ENCODE measurements at regions of chr1 and their contacts with region 1.

Region 1: DNA sequence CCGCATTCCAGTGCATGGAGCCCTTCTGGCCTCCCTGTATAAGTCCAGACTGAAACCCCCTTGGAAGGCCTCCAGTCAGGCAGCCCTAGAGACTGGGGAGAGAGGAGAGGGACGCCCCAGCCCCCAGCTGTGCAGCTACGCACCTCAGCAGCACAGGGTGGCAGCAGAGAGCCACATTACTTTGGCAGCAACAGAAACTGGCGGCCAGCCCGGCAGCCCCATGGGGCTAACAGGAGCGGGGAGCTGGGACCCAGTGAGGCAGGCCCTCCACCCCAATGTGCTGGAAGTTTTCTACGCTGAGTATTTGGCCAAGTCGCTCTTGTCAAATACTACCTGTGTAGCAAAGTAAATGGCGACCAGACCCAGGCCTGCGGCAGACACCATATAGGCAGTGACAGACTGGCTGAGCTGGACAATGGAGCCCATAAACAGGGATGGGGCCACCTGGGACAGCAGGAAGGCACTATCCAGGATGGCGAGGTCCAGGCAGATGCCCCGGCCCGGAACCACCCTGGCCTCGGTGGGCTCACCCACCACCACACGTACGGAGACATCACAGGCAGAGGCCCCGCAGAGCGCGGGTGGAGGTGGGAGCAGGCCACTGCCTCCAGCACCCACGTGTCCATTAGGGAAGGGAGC is 21.2 kb downstream of the SLC45A3 start:
- DNase-seq: peak; percentile 70 to 81
- H3K4me3 ChIP-seq: no peak overlapping the region
- H3K4me3 Mint-ChIP-seq: no peak overlapping the region
- H3K27ac Mint-ChIP-seq: no peak overlapping the region
- H3K4me1 ChIP-seq: no peaks in the 10 kb centered on the region
- H3K4me1 Mint-ChIP-seq: no peaks in the 10 kb centered on the region
- H3K27me3 ChIP-seq: no peaks in the 10 kb centered on the region
- H3K27me3 Mint-ChIP-seq: no peaks in the 10 kb centered on the region
- CTCF ChIP-seq: peak; percentile 85 to 90

Region 2: DNA sequence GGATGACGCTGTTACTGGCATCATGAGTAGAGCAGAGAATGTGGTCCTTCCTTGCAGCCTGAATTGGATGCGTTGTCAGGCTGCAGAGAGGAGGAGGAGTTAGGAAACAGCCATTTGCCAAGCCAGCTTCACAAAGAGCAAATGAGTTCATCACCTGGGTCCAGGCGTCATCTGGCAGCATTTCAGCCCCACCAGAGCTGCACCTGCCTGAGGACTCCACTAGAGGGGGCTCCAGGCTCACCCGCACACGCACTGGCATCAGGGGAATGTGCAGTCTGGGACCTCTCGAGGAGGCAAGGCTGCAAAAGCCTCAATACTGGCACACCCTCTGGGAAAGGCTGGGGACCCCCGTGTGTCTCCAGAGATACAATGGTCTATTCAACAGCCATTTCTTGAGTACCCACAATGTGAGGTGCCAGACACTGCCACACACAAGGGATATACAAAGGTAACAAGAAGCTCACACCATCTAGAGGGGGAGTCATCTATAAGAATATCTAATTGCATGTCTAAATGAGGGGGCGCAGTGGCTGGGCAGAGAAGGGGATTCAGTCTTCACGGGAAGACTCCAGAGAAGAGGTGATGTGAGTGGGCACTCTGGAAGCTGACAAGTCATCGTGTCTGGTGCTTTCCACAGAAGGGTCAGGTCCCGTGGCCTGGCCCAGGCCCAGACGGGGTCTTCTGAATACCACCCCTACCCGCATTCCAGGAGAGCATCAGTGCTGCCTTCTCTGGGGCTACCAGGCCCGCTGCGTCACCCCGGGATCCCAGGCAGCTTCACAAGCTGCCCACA is 669.6 kb before region 1 on chr1:
- CTCF ChIA-PET with region 1: interaction called, 11 read pairs
- POLR2A ChIA-PET with region 1: no interaction called
- intact Hi-C with region 1: no loop called
- DNase-seq: peak; percentile 61 to 76
- H3K4me3 ChIP-seq: no peak overlapping the region
- H3K4me3 Mint-ChIP-seq: no peak overlapping the region
- H3K27ac Mint-ChIP-seq: no peak overlapping the region
- H3K4me1 ChIP-seq: no peaks in the 10 kb centered on the region
- H3K4me1 Mint-ChIP-seq: no peaks in the 10 kb centered on the region
- H3K27me3 ChIP-seq: no peaks in the 10 kb centered on the region; the same call in 1 of the 2 replicates
- H3K27me3 Mint-ChIP-seq: peaks cover 22% of the 10 kb centered on the region
- CTCF ChIP-seq: peak; percentile 94 to 97

Region 3: DNA sequence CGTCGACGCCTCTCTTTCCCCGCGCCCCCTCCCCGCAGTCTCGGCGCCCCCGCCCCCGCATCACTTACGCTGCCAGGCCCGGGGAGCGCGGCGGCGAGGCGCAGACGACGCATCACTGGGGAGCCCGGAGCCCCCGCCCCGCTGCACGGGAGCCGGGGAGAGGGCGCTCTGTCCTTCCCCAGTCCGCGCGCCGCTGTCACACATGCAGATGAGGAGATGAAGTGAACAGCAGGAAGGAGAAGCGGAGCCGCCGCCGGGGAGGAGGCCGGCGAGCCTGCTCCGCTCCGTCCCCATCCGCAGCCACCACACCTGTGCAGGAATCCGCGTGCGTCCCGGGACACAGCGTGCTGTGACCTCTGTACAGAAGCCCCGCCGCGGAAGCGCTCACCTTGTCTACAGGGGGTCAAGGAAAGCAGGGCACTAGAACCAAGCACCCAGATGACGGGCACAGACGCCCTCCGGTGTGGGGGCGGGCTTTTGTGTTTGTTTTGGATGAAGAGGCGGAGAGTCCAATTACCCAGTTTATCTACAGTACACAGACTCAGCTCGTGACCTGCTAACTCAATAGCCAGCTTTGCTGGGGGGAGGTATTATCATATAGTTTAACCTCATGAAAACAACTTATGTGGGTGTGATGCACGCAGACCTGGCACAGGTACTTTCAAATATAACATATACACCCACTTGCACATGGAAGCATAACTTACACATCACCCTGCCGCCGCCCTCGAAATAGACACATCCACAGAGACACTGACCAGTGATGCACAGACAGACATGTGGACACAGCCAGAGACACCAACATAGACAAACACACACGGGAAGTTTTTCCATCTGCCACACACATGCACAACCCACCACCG is 314.8 kb before region 1 on chr1:
- CTCF ChIA-PET with region 1: no interaction called
- POLR2A ChIA-PET with region 1: no interaction called
- intact Hi-C with region 1: no loop called
- DNase-seq: peak; percentile 51 to 56
- H3K4me3 ChIP-seq: peak overlapping the region; percentile 33
- H3K4me3 Mint-ChIP-seq: peak overlapping the region; percentile 77
- H3K27ac Mint-ChIP-seq: no peak overlapping the region
- H3K4me1 ChIP-seq: 0 out of 2 replicates have a peak, but pooled peaks cover 5% of the 10 kb centered on the region
- H3K4me1 Mint-ChIP-seq: peaks cover 7% of the 10 kb centered on the region
- H3K27me3 ChIP-seq: no peaks in the 10 kb centered on the region; the same call in 1 of the 2 replicates
- H3K27me3 Mint-ChIP-seq: peaks cover 16% of the 10 kb centered on the region
- CTCF ChIP-seq: peak in 1 of 2 experiments; percentile 2

Region 4: GRCh38 chr1:205504311-205504984 is 154.6 kb before region 1 on chr1 and contains the start of gene CDK18:
- CTCF ChIA-PET with region 1: interaction called, 13 read pairs
- POLR2A ChIA-PET with region 1: no interaction called
- intact Hi-C with region 1: no loop called
- DNase-seq: peak; percentile 77 to 89
- H3K4me3 ChIP-seq: peak within 1 kb of the TSS; percentile 55
- H3K4me3 Mint-ChIP-seq: peak within 1 kb of the TSS; percentile 95
- H3K27ac Mint-ChIP-seq: peak within 1 kb of the TSS; percentile 82
- H3K4me1 ChIP-seq: peaks cover 30% of the 10 kb centered on the region
- H3K4me1 Mint-ChIP-seq: peaks cover 16% of the 10 kb centered on the region
- H3K27me3 ChIP-seq: no peaks in the 10 kb centered on the region
- H3K27me3 Mint-ChIP-seq: no peaks in the 10 kb centered on the region
- CTCF ChIP-seq: no peak
- total RNA-seq, gene CDK18: 17.0 and 18.5 TPM in 2 replicates

Region 5: GRCh38 chr1:205591522-205592351 is 67.3 kb before region 1 on chr1:
- CTCF ChIA-PET with region 1: interaction called, 95 read pairs
- POLR2A ChIA-PET with region 1: no interaction called
- intact Hi-C with region 1: loop called (anchors 1 kb)
- DNase-seq: peak; percentile 87 to 93
- H3K4me3 ChIP-seq: peak overlapping the region; percentile 38
- H3K4me3 Mint-ChIP-seq: peak overlapping the region; percentile 73
- H3K27ac Mint-ChIP-seq: no peak overlapping the region
- H3K4me1 ChIP-seq: no peaks in the 10 kb centered on the region
- H3K4me1 Mint-ChIP-seq: no peaks in the 10 kb centered on the region
- H3K27me3 ChIP-seq: no peaks in the 10 kb centered on the region
- H3K27me3 Mint-ChIP-seq: no peaks in the 10 kb centered on the region
- CTCF ChIP-seq: peak; percentile 97 to 98

Region 6: DNA sequence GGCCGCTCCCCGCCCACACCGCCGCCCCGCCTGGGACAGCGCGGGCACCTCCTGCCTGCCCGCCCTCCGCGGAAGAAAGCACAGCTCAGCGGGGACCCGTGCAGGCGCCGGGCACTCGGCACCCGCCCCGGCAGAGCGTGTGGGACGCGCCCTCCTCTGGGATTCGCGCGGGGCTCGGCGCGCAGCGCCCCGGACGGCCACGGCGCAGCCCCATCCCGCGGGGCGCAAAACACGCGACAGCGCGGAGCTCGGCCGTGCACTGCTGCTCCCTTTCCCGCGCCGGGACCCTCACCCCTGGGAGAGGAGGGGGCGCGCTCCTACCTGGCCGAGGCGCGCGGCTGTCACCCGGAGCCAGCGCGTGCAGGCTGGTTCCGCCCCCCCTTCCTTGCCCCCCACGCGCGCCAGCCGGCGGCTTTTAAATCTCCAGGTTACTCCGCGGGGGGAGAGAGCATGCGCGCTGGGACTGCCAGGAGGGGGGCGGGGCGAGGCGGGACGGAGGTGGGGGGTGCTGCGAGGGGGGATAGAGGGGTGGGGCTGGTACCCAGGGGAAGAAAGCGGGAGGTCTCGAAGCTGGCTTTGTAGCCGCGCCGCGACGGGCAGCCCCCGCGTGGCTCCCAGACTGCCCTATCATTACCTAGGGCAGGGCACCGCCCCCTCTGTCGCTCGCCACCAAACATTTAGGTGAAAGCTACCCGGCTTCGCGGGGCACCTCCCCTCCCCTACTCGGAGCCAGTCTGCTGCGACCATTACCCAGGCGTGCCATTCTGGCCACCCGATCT is 21.2 kb after region 1 on chr1 and contains the start of gene SLC45A3:
- CTCF ChIA-PET with region 1: interaction called, 20 read pairs
- POLR2A ChIA-PET with region 1: no interaction called
- intact Hi-C with region 1: no loop called
- DNase-seq: peak; percentile 39 to 44
- H3K4me3 ChIP-seq: peak within 1 kb of the TSS; percentile 85
- H3K4me3 Mint-ChIP-seq: peak within 1 kb of the TSS; percentile 84
- H3K27ac Mint-ChIP-seq: peak within 1 kb of the TSS; percentile 42
- H3K4me1 ChIP-seq: peaks cover 28% of the 10 kb centered on the region
- H3K4me1 Mint-ChIP-seq: peaks cover 33% of the 10 kb centered on the region
- H3K27me3 ChIP-seq: no peaks in the 10 kb centered on the region
- H3K27me3 Mint-ChIP-seq: no peaks in the 10 kb centered on the region
- CTCF ChIP-seq: no peak
- total RNA-seq, gene SLC45A3: 5.5 TPM in 2 replicates

Region 7: GRCh38 chr1:205739348-205740160 is 80.5 kb after region 1 on chr1:
- CTCF ChIA-PET with region 1: interaction called, 15 read pairs
- POLR2A ChIA-PET with region 1: no interaction called
- intact Hi-C with region 1: no loop called
- DNase-seq: peak in 1 of 2 experiments; percentile 23
- H3K4me3 ChIP-seq: no peak overlapping the region
- H3K4me3 Mint-ChIP-seq: no peak overlapping the region
- H3K27ac Mint-ChIP-seq: no peak overlapping the region
- H3K4me1 ChIP-seq: no peaks in the 10 kb centered on the region
- H3K4me1 Mint-ChIP-seq: peaks cover 10% of the 10 kb centered on the region
- H3K27me3 ChIP-seq: no peaks in the 10 kb centered on the region
- H3K27me3 Mint-ChIP-seq: no peaks in the 10 kb centered on the region
- CTCF ChIP-seq: peak in 1 of 2 experiments; percentile 36

Region 8: DNA sequence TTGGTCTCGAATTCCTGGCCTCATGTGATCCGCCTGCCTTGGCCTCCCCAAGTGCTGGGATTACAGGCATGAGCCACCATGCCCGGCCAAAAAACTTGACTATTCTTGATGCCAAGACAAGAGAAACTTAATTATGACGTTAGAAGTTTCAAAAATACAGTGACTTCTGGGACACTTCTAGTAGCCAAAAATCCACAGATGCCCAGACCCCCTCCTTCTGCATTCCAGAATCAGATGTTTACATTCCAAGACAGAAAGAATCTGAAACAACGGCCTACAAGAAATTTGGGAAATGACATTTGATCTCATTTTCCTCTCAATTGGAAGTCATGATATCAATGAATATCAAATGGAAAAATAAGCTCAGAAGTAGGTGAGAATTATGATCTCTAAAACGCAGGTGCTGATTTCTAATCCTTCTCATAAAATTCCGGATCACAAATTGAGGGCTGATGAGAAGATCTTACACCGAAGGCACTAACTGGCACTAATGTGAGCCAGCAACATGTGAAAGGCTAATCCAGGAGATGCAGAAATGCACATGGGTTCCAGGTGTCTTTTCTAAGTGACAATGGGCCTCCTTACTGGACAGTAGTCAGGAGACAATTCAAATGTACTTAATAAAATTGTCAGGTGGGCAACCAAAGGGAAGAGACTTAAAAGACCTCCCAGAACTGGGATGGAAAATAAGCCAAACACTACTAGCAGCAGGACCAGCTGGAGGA is 110.7 kb after region 1 on chr1:
- CTCF ChIA-PET with region 1: no interaction called
- POLR2A ChIA-PET with region 1: no interaction called
- intact Hi-C with region 1: no loop called
- DNase-seq: no peak
- H3K4me3 ChIP-seq: no peak overlapping the region
- H3K4me3 Mint-ChIP-seq: no peak overlapping the region
- H3K27ac Mint-ChIP-seq: no peak overlapping the region
- H3K4me1 ChIP-seq: peaks cover 22% of the 10 kb centered on the region
- H3K4me1 Mint-ChIP-seq: peaks cover 11% of the 10 kb centered on the region
- H3K27me3 ChIP-seq: no peaks in the 10 kb centered on the region
- H3K27me3 Mint-ChIP-seq: no peaks in the 10 kb centered on the region
- CTCF ChIP-seq: no peak

Measured in Caco-2 (cell line).